ENCODE measurements at regions of chr20 and their contacts with region 1.

Region 1: DNA sequence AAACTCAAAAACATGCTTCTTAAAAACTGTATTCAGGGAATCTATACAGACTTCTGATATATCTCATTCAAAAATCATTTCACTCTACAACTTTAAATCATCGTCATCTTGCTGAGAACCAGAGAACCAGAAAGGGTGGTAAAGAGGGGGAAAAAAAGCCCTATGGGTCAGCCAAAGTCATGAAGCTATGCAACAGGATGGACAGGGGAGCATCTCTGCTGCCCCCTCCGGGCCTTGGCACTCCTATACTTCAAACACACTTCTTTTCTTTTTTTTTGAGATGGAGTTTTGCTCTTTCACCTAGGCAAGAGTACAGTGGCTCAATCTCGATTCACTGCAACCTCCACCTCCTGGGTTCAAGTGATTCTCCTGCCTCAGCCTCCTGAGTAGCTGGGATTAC is 73.5 kb upstream of the NFATC2 start:
- DNase-seq: no peak
- ATAC-seq: peak; percentile 69
- H3K4me3 ChIP-seq: no peak overlapping the region
- H3K27ac ChIP-seq: no peak overlapping the region
- H3K4me1 ChIP-seq: no peaks in the 10 kb centered on the region
- H3K27me3 ChIP-seq: no peaks in the 10 kb centered on the region
- CTCF ChIP-seq: peak; percentile 21; the same call in 1 of the 2 replicates
- EP300 ChIP-seq: no peak
- POLR2A ChIP-seq: no peak
- RAD21 ChIP-seq: no peak

Region 2: GRCh38 chr20:51569827-51570738 is 46.0 kb before region 1 on chr20:
- CTCF ChIA-PET with region 1: no interaction called
- POLR2A ChIA-PET with region 1: no interaction called
- in situ Hi-C with region 1: no loop called
- intact Hi-C with region 1: loop called (anchors 1 kb)
- DNase-seq: peak; percentile 25
- ATAC-seq: no peak
- H3K4me3 ChIP-seq: no peak overlapping the region
- H3K27ac ChIP-seq: no peak overlapping the region
- H3K4me1 ChIP-seq: peaks cover 19% of the 10 kb centered on the region
- H3K27me3 ChIP-seq: peaks cover 3 to 38% of the 10 kb centered on the region in 2 experiments; a peak in 4 of 5 replicates
- CTCF ChIP-seq: no peak
- EP300 ChIP-seq: no peak
- POLR2A ChIP-seq: no peak
- RAD21 ChIP-seq: no peak

Measured in HepG2 (cell line).